Natural killer cell (primary cell): ENCODE measurements at regions of chr12 and their contacts with region 1.

Region 1: DNA sequence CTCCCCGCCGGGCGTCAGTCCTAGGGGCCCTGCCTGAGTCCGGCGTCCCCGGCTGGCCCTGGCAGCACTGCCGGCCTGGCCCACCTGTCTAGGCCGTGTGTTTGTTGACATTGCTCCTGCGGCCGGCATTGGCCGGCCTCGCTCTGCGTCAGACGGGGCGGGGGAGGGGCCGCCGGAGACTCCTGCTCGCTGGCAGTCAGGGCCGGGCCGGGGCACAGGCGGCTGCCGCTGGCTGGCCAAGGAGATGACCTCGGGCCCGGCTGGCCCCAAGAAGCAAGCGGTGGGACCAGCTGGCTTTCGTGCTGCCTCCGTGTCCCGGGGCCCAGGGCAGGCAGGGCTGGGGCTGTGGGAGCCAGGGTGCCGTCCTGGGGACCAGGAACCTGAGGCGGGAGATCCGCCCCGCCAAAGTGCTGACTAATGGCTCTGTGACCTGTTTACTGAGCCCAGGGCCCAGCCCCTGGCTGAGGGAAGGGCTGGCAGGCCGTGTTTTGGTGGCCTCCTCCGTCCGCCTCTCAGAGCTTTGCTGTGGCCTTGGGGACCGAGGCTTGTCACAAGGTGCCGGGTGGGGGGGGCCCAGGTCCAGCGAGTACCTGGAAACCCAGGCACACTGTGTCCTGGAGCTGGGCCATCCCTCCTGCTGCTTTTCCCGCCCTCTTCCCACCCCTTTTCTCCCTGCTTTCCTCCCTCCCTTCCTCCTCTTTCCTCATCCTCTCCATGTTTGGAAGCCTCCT is 1.8 kb downstream of the ULK1 start:
- DNase-seq: peak; percentile 71 to 78
- ATAC-seq: peak; percentile 71 to 85 (median 73)
- H3K4me3 ChIP-seq: peak overlapping the region; percentile 52
- H3K4me3 Mint-ChIP-seq: peak overlapping the region; percentile 88
- H3K27ac ChIP-seq: peak overlapping the region; percentile 43
- H3K27ac Mint-ChIP-seq: peak overlapping the region; percentile 77 to 92
- H3K4me1 ChIP-seq: peaks cover 21% of the 10 kb centered on the region
- H3K4me1 Mint-ChIP-seq: peaks cover 0 to 31% of the 10 kb centered on the region in 2 donors
- H3K27me3 ChIP-seq: no peaks in the 10 kb centered on the region
- H3K27me3 Mint-ChIP-seq: no peaks in the 10 kb centered on the region
- CTCF ChIP-seq: no peak

Region 2: DNA sequence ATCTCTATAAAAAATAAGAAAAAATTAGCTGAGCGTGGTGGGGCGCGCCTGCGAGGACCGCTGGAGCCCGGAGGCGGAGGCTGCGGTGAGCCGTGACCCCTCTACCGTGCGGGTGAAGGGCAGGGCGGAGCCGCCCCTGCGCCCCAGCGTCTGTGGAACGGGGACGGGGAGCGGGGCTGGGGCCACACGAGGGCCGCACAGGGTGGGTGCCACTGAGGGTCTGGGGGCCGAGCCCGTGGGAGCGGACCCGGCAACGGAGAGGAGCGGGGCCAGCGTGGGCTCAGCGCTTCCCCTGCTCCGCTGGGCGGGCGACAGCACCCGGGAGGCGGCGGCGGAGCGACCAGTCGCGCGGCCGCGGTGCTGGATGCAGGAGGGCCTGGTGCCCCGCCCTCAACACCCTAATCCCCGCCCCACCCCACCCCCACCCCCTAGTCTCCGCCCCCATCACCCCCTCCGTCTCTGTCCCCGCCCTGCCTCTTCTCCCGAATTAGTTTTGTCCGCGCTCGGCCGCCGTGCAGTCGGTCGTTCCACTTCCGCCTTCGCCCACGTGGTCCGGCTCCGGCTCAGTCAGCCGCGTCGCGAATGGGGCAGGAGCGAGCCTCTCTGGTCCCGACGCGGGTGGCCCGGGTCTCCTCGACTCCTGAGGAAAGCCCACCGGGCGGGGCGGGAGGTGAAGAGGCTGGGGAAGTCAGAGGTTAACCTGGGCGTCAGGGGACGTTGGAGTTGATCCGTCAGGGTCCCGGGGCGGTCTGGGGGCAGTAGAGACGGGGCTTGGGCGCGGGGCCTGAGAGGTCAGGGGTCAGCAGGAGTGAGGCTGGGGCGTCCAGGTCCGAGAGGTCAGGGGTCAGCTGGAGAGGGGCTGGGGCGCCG is 32.7 kb after region 1 on chr12 and contains the start of gene PUS1:
- intact Hi-C with region 1: loop called (anchors 1 kb)
- DNase-seq: peak; percentile 90 to 97
- ATAC-seq: peak; percentile 87 to 95 (median 90)
- H3K4me3 ChIP-seq: peak within 1 kb of the TSS; percentile 73
- H3K4me3 Mint-ChIP-seq: peak within 1 kb of the TSS; percentile 97
- H3K27ac ChIP-seq: peak within 1 kb of the TSS; percentile 43
- H3K27ac Mint-ChIP-seq: peak within 1 kb of the TSS; percentile 83 to 95
- H3K4me1 ChIP-seq: peaks cover 30% of the 10 kb centered on the region
- H3K4me1 Mint-ChIP-seq: peaks cover 9 to 26% of the 10 kb centered on the region in 2 donors
- H3K27me3 ChIP-seq: no peaks in the 10 kb centered on the region
- H3K27me3 Mint-ChIP-seq: no peaks in the 10 kb centered on the region
- CTCF ChIP-seq: no peak
- total RNA-seq, gene PUS1: 16.9 to 21.9 (median 20.6) TPM

Region 3: DNA sequence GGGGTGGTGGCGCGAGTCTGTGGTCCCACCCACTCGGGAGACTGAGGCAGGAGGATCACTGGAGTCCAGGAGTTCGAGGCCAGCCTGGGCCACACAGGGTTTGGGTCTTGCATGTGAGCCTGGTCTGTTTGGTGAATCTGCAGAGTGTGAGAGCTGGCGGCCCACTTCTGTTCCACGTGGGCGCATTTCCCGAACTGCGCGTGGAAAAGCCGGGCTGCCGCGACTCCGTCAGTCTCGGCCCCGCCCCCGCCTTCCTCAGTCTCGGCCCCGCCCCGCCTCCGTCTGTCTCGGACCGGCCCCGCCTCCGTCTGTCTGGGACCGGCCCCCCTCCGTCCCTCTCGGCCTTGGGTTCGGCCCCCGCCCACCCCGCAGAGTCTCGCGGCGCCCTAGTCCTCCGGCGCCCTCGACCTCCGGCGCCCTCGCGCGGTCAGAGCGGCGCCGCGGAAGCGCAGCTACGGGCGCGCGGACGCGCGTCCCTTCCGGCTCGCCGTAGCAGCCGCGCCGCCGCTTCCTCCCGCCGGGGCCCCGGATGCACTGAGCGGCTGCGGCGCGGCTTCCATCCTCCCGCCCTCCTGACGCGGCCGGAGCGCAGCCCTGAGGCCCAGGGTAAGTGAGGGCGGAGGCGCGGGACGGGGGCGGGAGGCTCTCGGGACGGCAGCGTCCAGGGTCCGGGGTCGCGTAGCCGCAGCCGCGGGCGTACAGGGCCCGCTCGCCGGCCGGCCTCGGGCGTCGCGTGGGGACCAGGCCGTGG is 53.4 kb after region 1 on chr12 and contains the start of gene EP400:
- intact Hi-C with region 1: loop called (anchors 1 kb)
- DNase-seq: peak; percentile 88 to 96
- ATAC-seq: peak; percentile 91 to 97 (median 93)
- H3K4me3 ChIP-seq: peak within 1 kb of the TSS; percentile 60
- H3K4me3 Mint-ChIP-seq: peak within 1 kb of the TSS; percentile 94
- H3K27ac ChIP-seq: peak within 1 kb of the TSS; percentile 74
- H3K27ac Mint-ChIP-seq: peak within 1 kb of the TSS; percentile 59 to 89
- H3K4me1 ChIP-seq: peaks cover 40% of the 10 kb centered on the region
- H3K4me1 Mint-ChIP-seq: peaks cover 26 to 35% of the 10 kb centered on the region in 2 donors
- H3K27me3 ChIP-seq: no peaks in the 10 kb centered on the region
- H3K27me3 Mint-ChIP-seq: no peaks in the 10 kb centered on the region
- CTCF ChIP-seq: no peak
- total RNA-seq, gene EP400: 62.8 to 81.1 (median 80.1) TPM

Region 4: GRCh38 chr12:131959641-131960589 is 63.7 kb after region 1 on chr12:
- intact Hi-C with region 1: no loop called
- DNase-seq: no peak
- ATAC-seq: no peak
- H3K4me3 ChIP-seq: no peak overlapping the region
- H3K4me3 Mint-ChIP-seq: no peak overlapping the region
- H3K27ac ChIP-seq: no peak overlapping the region
- H3K27ac Mint-ChIP-seq: peak overlapping the region in 1 of 2 donors; percentile 70
- H3K4me1 ChIP-seq: peaks cover 14% of the 10 kb centered on the region
- H3K4me1 Mint-ChIP-seq: peaks cover 63 to 66% of the 10 kb centered on the region in 2 donors
- H3K27me3 ChIP-seq: no peaks in the 10 kb centered on the region
- H3K27me3 Mint-ChIP-seq: no peaks in the 10 kb centered on the region
- CTCF ChIP-seq: no peak